ENCODE measurements at regions of chr5 and their contacts with region 1.

Region 1: DNA sequence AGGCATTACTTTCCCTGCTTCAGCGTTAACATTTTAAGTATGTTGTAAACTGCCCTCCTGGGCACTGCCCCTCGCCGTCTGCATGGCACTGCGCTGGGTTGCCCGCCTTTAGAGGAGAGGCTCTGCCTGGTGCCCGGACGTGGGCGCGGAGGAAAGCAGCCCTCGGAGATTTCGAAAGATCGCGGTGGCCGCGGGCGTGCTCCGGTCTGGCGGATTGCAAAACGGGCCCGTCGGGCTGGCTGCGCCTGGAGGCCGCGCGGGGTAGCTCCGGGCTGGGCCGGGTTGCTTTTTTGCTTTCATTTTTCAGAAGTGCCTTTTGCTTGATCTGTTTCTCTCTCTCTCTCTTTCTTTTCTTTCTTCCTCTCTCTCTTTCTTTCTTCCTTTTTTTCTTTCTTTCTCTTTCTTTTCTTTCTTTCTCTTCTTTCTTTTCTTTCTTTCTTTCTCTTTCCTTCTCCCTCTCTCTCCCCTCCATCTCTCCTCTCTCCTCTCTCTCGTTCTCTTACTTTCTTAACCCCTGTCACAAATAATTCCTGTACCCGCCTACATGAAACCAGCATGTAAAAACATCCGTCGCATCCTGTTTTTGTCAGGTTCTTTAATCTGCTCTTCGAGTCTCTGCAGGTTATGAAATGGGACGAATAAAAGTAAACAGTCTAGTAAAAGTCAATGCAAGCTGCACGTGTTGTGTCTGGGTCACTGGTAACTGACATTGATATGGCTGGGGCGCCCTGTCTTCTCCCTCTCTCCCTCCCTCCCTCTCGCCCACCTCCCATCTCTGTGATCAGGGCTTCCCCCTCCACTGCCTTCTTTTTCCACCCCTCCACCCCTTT is 1.7 kb downstream of the FST start:
- DNase-seq: peak; percentile 91
- ATAC-seq: peak; percentile 88 to 89
- H3K4me3 ChIP-seq: peak overlapping the region; percentile 78
- H3K27ac ChIP-seq: peak overlapping the region; percentile 6
- H3K4me1 ChIP-seq: peaks cover 18% of the 10 kb centered on the region
- H3K27me3 ChIP-seq: no peaks in the 10 kb centered on the region
- CTCF ChIP-seq: no peak

Region 2: DNA sequence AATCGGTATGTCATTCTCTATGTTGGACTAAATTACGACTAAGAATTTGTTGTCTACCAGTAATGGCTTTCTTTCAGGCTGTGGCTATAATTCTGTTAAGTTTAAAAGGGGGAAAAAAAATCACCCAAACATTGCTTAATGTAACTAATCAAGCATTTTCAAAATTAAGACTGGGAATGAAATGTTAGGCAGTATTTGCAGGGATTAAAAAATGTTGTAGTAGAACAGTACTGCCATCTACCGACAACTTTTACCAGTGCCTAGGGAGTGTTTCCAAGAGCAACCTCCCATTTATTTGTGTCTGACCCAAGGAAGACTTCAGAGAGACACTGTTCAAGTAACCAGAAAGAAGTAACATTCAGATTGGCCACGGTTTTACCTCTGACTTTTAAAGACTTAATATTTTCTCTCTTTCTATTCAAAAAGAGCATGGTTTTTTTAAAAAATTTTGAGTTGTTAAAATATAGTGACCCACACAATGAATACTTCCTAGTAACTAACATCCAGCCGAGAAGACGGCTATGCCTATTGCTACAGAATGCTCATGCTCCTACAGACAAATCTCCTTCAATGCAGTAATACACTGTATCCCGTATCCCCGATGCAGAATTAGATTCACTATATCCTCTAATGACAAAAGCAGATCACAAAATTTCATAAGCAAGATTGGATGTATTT is 735.9 kb after region 1 on chr5:
- intact Hi-C with region 1: loop called (anchors 10 kb)
- DNase-seq: no peak
- ATAC-seq: peak; percentile 67 to 83
- H3K4me3 ChIP-seq: no peak overlapping the region
- H3K27ac ChIP-seq: no peak overlapping the region
- H3K4me1 ChIP-seq: no peaks in the 10 kb centered on the region
- H3K27me3 ChIP-seq: no peaks in the 10 kb centered on the region
- CTCF ChIP-seq: peak; percentile 82

Measured in lower lobe of right lung (tissue), 2 donors.